Dorsolateral prefrontal cortex (tissue), 120 donors: ENCODE measurements at regions of chr1 and their contacts with region 1.

Region 1: DNA sequence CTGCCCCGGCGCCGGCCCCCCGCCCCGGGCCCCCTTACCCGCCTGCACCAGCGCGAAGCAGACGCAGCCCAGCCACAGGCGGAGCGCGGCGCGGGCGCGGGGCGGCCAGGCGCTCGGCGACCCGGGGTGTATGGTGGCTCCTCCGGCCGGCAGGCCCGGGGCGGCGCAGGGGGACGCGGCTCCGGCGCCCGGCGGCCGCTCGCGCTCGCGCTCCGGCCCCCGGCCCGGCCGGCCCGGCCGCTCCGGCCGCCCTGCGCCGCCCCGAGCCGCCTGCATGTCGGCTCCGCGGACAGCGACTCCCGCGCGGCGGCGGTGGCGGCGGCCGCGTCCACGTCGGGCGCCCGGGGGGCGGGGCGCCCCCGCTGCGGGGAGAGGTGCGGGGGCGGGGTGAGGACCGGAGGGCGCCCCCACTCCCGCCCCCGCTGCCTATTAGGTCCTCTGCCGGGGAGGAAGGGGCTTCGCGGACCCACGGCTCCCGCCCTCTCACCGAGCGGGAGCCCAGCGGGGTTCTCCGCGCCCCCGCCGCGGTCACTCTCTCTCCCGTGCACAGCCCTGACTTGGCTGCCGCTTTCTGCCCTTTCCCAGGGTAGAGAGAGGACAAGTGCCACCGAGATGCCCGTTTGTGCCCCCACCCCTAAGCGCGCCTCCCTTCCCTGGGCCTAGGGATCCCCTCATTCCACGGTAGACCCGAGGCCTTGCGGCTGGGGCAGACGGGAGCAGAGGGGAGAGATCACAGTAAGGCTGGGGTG is at the start of gene FNDC5:
- DNase-seq: peak in 1 of 10 donors; percentile 41
- H3K4me3 ChIP-seq: peak within 1 kb of the TSS; percentile 25 to 71 (median 54)
- H3K27ac ChIP-seq: peak within 1 kb of the TSS in 50 of 59 donors; percentile 5 to 83 (median 64)
- H3K27me3 ChIP-seq: no peaks in the 10 kb centered on the region
- CTCF ChIP-seq: peak in 1 of 56 donors; percentile 6
- total RNA-seq, gene FNDC5: 5.1 to 60.1 (median 32.9) TPM

Region 2: GRCh38 chr1:32817159-32817814 is 53.5 kb before region 1 on chr1 and contains the starts of genes S100PBP and YARS1:
- intact Hi-C with region 1: loop called in 1 of 2 experiments (anchors 5 kb)
- DNase-seq: peak; percentile 98 to 100 (median 100)
- H3K4me3 ChIP-seq: peak within 1 kb of the TSS; percentile 66 to 100 (median 97)
- H3K27ac ChIP-seq: peak within 1 kb of the TSS; percentile 52 to 97 (median 91)
- H3K27me3 ChIP-seq: no peaks in the 10 kb centered on the region
- CTCF ChIP-seq: peak in 37 of 56 donors; percentile 14 to 58 (median 36)
- total RNA-seq, gene S100PBP: 26.9 to 75.5 (median 43.2) TPM
- total RNA-seq, gene YARS1: 66.2 to 170 (median 126) TPM

Region 3: DNA sequence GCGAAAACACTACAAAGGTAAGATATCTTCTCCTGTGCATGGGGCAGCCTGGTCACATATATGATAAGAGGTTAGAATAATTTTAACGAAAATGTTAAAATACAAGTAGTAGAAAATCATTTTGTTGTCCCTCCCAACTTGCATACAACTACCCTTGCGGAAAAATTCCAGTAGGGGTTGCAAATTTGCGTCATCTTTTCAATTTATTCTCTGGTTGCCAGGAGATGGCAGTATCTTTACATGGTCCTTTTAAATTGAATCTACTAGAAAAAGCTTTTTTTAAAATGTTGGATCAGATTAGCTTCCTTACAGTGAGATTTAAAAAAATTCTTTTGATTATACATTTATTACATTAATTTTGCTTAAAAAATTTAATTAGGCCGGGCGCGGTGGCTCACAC is 42.4 kb before region 1 on chr1:
- intact Hi-C with region 1: loop called in 1 of 2 experiments (anchors 5 kb)
- DNase-seq: no peak
- H3K4me3 ChIP-seq: no peak overlapping the region
- H3K27ac ChIP-seq: no peak overlapping the region
- H3K27me3 ChIP-seq: no peaks in the 10 kb centered on the region
- CTCF ChIP-seq: peak in 54 of 56 donors; percentile 21 to 64 (median 50)

Region 4: DNA sequence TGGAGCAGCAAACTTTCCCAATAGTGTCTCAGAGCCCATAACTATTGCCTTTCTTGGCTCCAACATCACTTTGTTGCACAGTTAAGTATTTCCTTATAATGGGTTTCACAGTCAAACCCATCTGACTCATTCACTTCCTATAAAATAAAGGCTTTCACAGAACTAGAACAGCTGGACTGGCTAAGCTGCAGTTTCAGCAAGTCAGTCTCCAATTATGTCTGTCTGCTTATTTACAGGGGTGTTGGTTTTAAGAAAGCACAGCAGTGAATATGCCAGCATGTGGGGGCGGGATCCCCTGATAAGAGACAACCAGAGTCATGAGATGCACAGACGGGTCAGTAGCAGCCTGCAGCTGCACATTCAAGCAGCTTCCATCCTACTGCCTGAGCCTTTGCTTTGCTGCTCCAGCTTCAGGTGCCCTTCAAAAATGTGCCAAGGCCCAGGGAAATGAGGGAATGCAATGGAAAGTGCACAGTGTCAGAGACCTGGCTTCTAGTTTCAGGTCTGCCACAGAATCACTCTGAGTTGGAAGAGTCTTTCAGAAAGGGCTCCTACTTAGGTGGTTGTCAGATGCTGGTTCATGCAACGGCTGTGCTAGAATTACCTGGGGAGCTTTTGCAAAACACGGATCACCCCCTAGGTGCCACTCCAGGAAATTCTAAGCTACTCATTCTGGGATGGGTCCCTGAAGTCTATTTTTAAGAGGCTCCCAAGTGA is 69.0 kb after region 1 on chr1:
- intact Hi-C with region 1: no loop called
- DNase-seq: peak in 3 of 10 donors; percentile 27 to 42 (median 39)
- H3K4me3 ChIP-seq: no peak overlapping the region
- H3K27ac ChIP-seq: peak overlapping the region in 47 of 59 donors; percentile 1 to 76 (median 38)
- H3K27me3 ChIP-seq: no peaks in the 10 kb centered on the region
- CTCF ChIP-seq: no peak